Caco-2 (cell line): ENCODE measurements at regions of chr11 and their contacts with region 1.

Region 1: DNA sequence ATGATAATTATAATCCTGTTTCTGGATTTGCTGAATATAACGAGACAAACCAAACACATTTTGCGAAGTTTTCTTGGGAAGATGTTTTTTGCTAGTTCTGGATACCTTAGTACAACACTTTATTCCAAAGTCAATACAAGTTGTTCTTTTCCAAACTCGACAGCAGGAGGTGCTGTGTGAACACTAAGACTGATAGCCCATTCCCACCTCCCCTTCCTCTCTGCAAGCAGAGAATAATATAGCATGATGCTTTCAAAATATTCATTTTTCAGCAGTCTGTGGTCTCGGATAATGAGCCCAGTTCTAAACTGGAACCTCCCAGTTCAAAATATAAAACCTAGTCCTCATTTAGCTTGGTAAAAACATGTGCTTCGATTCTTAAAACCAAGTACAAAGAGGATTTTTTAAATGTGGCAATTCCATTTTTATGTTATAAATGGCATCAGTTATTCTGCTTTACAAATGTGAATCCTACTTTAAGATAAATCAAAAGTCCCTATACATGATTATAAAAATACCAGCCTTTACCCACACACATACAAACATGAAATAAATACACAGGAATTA is 129.1 kb downstream of the DCDC1 start:
- DNase-seq: peak; percentile 42 to 51
- H3K4me3 ChIP-seq: no peak overlapping the region
- H3K4me3 Mint-ChIP-seq: no peak overlapping the region
- H3K27ac Mint-ChIP-seq: no peak overlapping the region
- H3K4me1 ChIP-seq: no peaks in the 10 kb centered on the region
- H3K4me1 Mint-ChIP-seq: no peaks in the 10 kb centered on the region
- H3K27me3 ChIP-seq: no peaks in the 10 kb centered on the region
- H3K27me3 Mint-ChIP-seq: peaks cover 3% of the 10 kb centered on the region
- CTCF ChIP-seq: peak; percentile 70 to 71

Region 2: DNA sequence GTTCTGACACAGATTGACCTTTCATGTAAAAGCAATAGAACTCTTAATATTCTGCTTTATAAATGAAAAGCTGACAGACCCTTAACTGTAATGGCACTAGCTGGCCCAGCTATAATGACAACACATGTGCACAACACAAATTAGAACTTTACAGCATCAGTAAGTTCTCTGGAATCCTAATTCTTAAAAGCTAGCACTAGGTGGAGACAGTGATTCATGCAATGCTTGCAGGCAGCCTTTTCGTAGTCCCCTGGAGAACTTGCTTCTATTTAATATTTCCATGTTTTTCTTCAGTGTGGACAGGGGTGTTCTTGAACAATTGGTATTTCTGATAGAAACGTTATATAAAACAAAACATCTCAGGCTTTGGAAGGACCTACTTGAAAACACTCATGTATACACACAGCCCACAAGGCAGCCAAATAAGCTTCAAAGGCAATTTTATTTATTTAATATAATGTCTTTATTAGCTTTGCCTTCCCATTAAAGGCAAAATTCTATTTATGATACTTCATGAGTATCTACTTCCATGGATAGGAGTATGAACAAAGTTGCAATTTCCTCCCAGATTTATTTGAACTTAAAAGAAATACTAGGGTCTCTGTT is 279.9 kb before region 1 on chr11:
- CTCF ChIA-PET with region 1: no interaction called
- POLR2A ChIA-PET with region 1: no interaction called
- intact Hi-C with region 1: loop called (anchors 1 kb)
- DNase-seq: peak in 1 of 2 experiments; percentile 43
- H3K4me3 ChIP-seq: no peak overlapping the region
- H3K4me3 Mint-ChIP-seq: no peak overlapping the region
- H3K27ac Mint-ChIP-seq: no peak overlapping the region
- H3K4me1 ChIP-seq: no peaks in the 10 kb centered on the region
- H3K4me1 Mint-ChIP-seq: no peaks in the 10 kb centered on the region
- H3K27me3 ChIP-seq: no peaks in the 10 kb centered on the region
- H3K27me3 Mint-ChIP-seq: peaks cover 7% of the 10 kb centered on the region
- CTCF ChIP-seq: peak; percentile 62 to 78

Region 3: GRCh38 chr11:31254431-31254830 is 14.0 kb after region 1 on chr11:
- CTCF ChIA-PET with region 1: no interaction called
- POLR2A ChIA-PET with region 1: no interaction called
- intact Hi-C with region 1: no loop called
- DNase-seq: no peak
- H3K4me3 ChIP-seq: no peak overlapping the region
- H3K4me3 Mint-ChIP-seq: no peak overlapping the region
- H3K27ac Mint-ChIP-seq: no peak overlapping the region
- H3K4me1 ChIP-seq: no peaks in the 10 kb centered on the region
- H3K4me1 Mint-ChIP-seq: no peaks in the 10 kb centered on the region
- H3K27me3 ChIP-seq: no peaks in the 10 kb centered on the region
- H3K27me3 Mint-ChIP-seq: peaks cover 3% of the 10 kb centered on the region
- CTCF ChIP-seq: no peak

Region 4: DNA sequence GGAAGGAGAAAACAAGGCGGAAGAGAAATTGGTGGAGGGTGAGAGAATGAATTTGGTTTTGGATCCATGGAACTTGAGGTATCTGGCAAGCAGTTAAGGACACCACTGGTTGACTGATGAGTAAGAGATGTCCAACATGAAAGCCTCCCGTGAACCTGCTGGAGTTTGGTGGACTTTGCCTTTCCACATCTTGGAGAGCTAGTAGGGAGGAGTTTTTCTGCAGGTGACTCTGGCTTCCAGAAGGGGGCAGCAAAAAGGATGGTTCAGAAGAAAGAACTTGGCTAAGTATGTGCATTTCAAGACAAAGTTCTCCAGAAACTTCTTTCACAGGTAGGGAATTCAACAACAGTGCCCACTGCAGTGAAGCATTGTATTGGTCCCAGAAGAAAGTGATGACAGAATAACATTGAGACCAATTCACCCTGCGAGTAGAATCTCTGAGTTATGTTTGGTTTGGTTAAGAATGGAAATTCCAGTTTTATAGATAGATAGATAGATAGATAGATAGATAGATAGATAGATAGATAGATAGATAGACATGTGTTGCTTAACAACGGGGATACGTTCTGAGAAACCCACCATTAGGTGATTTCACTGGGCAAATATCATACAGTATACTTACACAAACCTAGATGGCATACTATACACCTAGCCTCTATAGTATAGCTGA is 100.6 kb after region 1 on chr11:
- CTCF ChIA-PET with region 1: no interaction called
- POLR2A ChIA-PET with region 1: no interaction called
- intact Hi-C with region 1: loop called (anchors 2 kb)
- DNase-seq: peak in 1 of 2 experiments; percentile 52
- H3K4me3 ChIP-seq: no peak overlapping the region
- H3K4me3 Mint-ChIP-seq: no peak overlapping the region
- H3K27ac Mint-ChIP-seq: no peak overlapping the region
- H3K4me1 ChIP-seq: no peaks in the 10 kb centered on the region
- H3K4me1 Mint-ChIP-seq: no peaks in the 10 kb centered on the region
- H3K27me3 ChIP-seq: no peaks in the 10 kb centered on the region; the same call in 1 of the 2 replicates
- H3K27me3 Mint-ChIP-seq: peaks cover 6% of the 10 kb centered on the region
- CTCF ChIP-seq: peak; percentile 45 to 57

Region 5: DNA sequence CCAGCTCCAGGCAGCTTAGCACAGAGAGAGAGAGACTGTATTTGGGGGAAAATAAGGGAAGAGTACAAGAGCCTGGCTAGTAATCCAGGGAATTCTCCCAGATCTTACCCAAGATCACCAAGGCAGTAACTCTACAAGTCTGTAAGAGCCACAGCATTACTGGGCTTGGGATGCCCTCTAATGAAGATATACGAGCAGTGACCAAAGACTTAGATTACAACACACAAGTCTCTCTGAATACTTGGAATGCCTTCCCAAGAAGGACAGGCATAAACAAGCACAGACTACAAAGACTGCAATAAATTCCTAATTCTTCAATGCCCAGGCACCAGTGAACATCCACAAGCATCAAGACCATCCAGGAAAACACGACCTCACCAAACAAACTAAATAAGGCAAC is 147.0 kb after region 1 on chr11:
- CTCF ChIA-PET with region 1: no interaction called
- POLR2A ChIA-PET with region 1: no interaction called
- intact Hi-C with region 1: loop called (anchors 1 kb)
- DNase-seq: peak; percentile 41 to 60
- H3K4me3 ChIP-seq: no peak overlapping the region
- H3K4me3 Mint-ChIP-seq: no peak overlapping the region
- H3K27ac Mint-ChIP-seq: peak overlapping the region; percentile 63
- H3K4me1 ChIP-seq: peaks cover 11% of the 10 kb centered on the region
- H3K4me1 Mint-ChIP-seq: peaks cover 21% of the 10 kb centered on the region
- H3K27me3 ChIP-seq: no peaks in the 10 kb centered on the region
- H3K27me3 Mint-ChIP-seq: no peaks in the 10 kb centered on the region
- CTCF ChIP-seq: no peak

Region 6: GRCh38 chr11:31521497-31522150 is 281.2 kb after region 1 on chr11:
- CTCF ChIA-PET with region 1: no interaction called
- POLR2A ChIA-PET with region 1: no interaction called
- intact Hi-C with region 1: no loop called
- DNase-seq: no peak
- H3K4me3 ChIP-seq: no peak overlapping the region
- H3K4me3 Mint-ChIP-seq: no peak overlapping the region
- H3K27ac Mint-ChIP-seq: no peak overlapping the region
- H3K4me1 ChIP-seq: no peaks in the 10 kb centered on the region
- H3K4me1 Mint-ChIP-seq: no peaks in the 10 kb centered on the region
- H3K27me3 ChIP-seq: no peaks in the 10 kb centered on the region
- H3K27me3 Mint-ChIP-seq: no peaks in the 10 kb centered on the region
- CTCF ChIP-seq: no peak

Region 7: GRCh38 chr11:31870609-31871309 is 630.3 kb after region 1 on chr11:
- CTCF ChIA-PET with region 1: no interaction called
- POLR2A ChIA-PET with region 1: no interaction called
- intact Hi-C with region 1: loop called (anchors 1 kb)
- DNase-seq: peak; percentile 71 to 75
- H3K4me3 ChIP-seq: no peak overlapping the region
- H3K4me3 Mint-ChIP-seq: no peak overlapping the region
- H3K27ac Mint-ChIP-seq: no peak overlapping the region
- H3K4me1 ChIP-seq: no peaks in the 10 kb centered on the region
- H3K4me1 Mint-ChIP-seq: no peaks in the 10 kb centered on the region
- H3K27me3 ChIP-seq: no peaks in the 10 kb centered on the region
- H3K27me3 Mint-ChIP-seq: peaks cover 17% of the 10 kb centered on the region
- CTCF ChIP-seq: peak; percentile 58 to 90

Region 8: GRCh38 chr11:32006799-32007388 is 766.5 kb after region 1 on chr11:
- CTCF ChIA-PET with region 1: no interaction called
- POLR2A ChIA-PET with region 1: no interaction called
- intact Hi-C with region 1: loop called (anchors 1 kb)
- DNase-seq: peak in 1 of 2 experiments; percentile 44
- H3K4me3 ChIP-seq: no peak overlapping the region
- H3K4me3 Mint-ChIP-seq: no peak overlapping the region
- H3K27ac Mint-ChIP-seq: no peak overlapping the region
- H3K4me1 ChIP-seq: no peaks in the 10 kb centered on the region
- H3K4me1 Mint-ChIP-seq: no peaks in the 10 kb centered on the region
- H3K27me3 ChIP-seq: peaks cover 2% of the 10 kb centered on the region
- H3K27me3 Mint-ChIP-seq: peaks cover 21% of the 10 kb centered on the region
- CTCF ChIP-seq: peak; percentile 34 to 71